HCT116 (cell line): ENCODE measurements at regions of chr5 and their contacts with region 1.

Region 1: DNA sequence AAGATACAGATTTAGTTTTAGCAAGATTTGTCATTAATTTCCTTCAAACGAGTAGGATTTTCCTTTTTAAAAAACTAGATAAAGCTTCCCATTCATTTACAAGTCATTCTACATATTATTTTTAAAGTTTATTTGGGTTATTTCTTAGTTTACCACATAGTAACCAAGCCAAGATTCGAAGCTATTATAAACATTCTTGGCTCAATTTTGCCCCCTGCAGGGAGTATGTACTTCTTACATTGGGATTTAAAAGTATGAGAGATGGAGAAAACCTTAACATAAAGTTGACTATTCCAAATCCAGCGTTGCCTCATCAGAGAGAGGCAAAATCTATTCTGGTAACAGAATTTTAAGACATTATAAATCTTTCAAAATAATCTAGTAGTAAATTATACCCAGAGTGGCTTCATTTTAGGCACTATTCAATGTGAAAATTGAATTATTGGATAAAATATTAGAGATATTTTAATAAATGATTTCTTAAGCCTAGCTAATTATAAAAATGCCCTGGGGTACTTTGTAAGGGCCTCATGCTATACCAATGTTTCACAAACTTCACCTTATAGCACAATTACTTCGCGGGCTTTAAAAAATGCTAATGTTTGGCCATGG is 39.1 kb downstream of the FBN2 start:
- DNase-seq: peak; percentile 40
- ATAC-seq: peak; percentile 70
- H3K4me3 ChIP-seq: no peak overlapping the region
- H3K27ac ChIP-seq: no peak overlapping the region
- H3K4me1 ChIP-seq: no peaks in the 10 kb centered on the region
- H3K27me3 ChIP-seq: no peaks in the 10 kb centered on the region
- CTCF ChIP-seq: peak; percentile 47 to 66 (median 65); a peak in 5 of 6 replicates
- POLR2A ChIP-seq: no peak
- RAD21 ChIP-seq: peak; percentile 81

Region 2: GRCh38 chr5:127564002-127564769 is 934.8 kb before region 1 on chr5:
- CTCF ChIA-PET with region 1: interaction called, 3 read pairs
- POLR2A ChIA-PET with region 1: no interaction called
- RAD21 ChIA-PET with region 1: no interaction called
- intact Hi-C with region 1: loop called (anchors 2 kb)
- DNase-seq: peak; percentile 48
- ATAC-seq: peak; percentile 90
- H3K4me3 ChIP-seq: no peak overlapping the region
- H3K27ac ChIP-seq: no peak overlapping the region
- H3K4me1 ChIP-seq: no peaks in the 10 kb centered on the region
- H3K27me3 ChIP-seq: no peaks in the 10 kb centered on the region
- CTCF ChIP-seq: peak; percentile 52 to 82 (median 69); a peak in 5 of 6 replicates
- POLR2A ChIP-seq: no peak
- RAD21 ChIP-seq: peak; percentile 81

Region 3: DNA sequence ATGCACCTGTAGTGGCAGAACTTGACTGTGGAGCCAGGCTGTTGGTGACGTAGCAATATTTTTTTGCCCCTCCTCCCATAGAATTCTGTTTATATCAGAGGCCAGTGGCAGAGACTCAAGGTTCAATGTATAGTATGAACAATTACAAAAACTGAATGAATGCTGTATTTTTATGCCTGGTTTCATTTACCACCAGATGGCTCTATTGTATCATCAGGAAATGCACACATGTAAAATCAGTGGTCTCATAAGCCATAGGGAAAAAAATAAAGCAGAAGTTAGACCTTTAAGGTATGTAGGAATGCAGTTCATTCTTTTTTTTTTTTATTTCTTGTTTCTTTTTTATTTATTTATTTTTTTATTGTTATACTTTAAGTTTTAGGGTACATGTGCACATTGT is 752.2 kb before region 1 on chr5:
- CTCF ChIA-PET with region 1: no interaction called
- POLR2A ChIA-PET with region 1: no interaction called
- RAD21 ChIA-PET with region 1: no interaction called
- intact Hi-C with region 1: loop called (anchors 10 kb)
- DNase-seq: peak; percentile 10
- ATAC-seq: peak; percentile 72
- H3K4me3 ChIP-seq: no peak overlapping the region
- H3K27ac ChIP-seq: no peak overlapping the region
- H3K4me1 ChIP-seq: no peaks in the 10 kb centered on the region
- H3K27me3 ChIP-seq: no peaks in the 10 kb centered on the region
- CTCF ChIP-seq: peak; percentile 27 to 49 (median 39); a peak in 4 of 6 replicates
- POLR2A ChIP-seq: no peak
- RAD21 ChIP-seq: peak; percentile 66

Region 4: DNA sequence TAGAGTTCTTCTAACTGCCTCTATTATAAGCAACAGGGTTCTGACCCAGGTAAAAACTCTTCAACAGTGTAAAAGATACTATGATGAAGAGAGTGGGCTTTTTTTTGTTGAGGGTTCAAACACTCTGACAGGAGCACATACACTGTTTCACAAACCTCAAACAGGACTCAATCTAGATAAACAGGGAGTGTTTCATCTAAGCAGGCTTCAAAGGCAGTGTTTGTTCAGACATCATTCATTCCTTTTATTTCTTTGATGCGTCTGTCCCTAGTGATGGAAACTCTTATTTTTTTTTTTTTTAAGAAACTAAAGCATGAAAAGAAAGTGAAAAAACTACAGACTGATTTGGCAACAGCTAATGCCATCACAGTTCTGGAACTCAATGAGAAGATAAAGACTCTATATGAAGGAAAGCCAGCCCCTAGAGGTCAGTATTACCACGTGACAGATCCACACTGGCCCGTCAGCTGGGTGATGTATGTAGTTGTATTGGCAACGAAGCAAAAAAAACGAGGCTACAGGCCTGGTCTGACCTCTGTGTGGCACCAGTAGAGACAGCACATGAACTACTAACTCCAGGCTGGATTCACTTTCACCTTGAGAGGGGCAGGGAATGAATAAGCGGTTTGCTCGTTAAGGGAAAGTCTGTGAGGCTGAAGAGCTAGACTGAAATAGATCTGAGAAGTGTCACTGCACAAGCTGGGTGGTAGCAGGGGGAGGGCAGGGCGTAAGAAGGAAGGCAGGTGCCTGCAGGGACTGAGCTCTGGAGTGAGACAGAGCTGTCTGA is 623.5 kb before region 1 on chr5:
- CTCF ChIA-PET with region 1: interaction called, 10 read pairs
- POLR2A ChIA-PET with region 1: no interaction called
- RAD21 ChIA-PET with region 1: no interaction called
- intact Hi-C with region 1: loop called (anchors 5 kb)
- DNase-seq: peak; percentile 65
- ATAC-seq: peak; percentile 84
- H3K4me3 ChIP-seq: no peak overlapping the region
- H3K27ac ChIP-seq: peak overlapping the region; percentile 0; the same call in 1 of the 2 replicates
- H3K4me1 ChIP-seq: peaks cover 14 to 26% of the 10 kb centered on the region in 2 experiments
- H3K27me3 ChIP-seq: no peaks in the 10 kb centered on the region
- CTCF ChIP-seq: peak; percentile 5 to 53 (median 52); a peak in 3 of 6 replicates
- POLR2A ChIP-seq: no peak
- RAD21 ChIP-seq: peak; percentile 84

Region 5: DNA sequence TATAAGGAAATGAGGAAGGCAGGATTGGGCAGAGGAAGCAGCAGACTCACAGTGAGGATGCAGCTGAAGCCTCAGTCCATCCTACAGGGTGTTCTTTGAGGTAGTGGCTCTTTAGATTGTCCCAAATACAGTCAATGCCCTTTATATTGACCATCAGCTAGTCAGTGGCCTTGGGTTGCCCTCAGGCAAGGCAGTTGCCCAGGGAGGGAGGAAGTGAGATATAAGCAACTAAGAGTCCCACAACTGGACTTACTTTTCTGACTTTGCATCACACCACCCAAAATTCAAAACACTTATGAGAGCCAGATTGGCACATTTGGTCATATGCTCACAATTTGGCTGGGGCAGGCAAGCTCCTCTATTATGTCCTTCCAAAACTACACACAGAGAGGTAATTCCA is 424.8 kb before region 1 on chr5:
- CTCF ChIA-PET with region 1: no interaction called
- POLR2A ChIA-PET with region 1: no interaction called
- RAD21 ChIA-PET with region 1: no interaction called
- intact Hi-C with region 1: no loop called
- DNase-seq: no peak
- ATAC-seq: no peak
- H3K4me3 ChIP-seq: no peak overlapping the region
- H3K27ac ChIP-seq: no peak overlapping the region
- H3K4me1 ChIP-seq: no peaks in the 10 kb centered on the region
- H3K27me3 ChIP-seq: no peaks in the 10 kb centered on the region
- CTCF ChIP-seq: no peak
- POLR2A ChIP-seq: no peak
- RAD21 ChIP-seq: no peak

Region 6: DNA sequence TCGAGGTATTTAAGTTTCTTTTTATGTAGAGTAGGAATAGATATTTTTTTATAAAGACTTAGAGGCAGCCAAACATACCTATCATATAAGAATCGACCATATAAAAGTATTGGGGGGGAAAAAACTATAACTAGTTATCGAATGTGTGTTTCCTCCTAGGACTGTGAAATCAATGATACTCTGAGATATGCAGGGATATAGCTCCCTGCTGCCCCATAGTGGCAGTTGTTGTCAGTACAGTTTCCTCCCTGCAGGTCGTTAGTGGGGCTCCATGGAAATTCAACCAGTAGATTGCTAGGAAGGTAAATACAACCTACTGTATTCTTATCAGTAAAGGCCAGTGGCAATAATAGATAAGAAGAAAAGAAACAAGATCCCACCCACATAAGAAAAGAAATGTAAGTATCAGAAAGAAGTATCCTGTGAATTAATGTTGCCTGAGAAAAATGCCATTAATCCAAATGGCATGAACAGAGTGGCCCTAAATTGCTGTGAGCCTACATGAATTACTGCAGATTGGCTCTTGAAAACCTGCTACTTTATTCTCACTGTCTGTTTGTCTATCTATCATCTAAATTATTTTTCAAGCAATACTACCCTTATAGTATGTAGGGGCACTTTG is 176.0 kb after region 1 on chr5:
- CTCF ChIA-PET with region 1: interaction called, 7 read pairs
- POLR2A ChIA-PET with region 1: no interaction called
- RAD21 ChIA-PET with region 1: no interaction called
- intact Hi-C with region 1: loop called (anchors 5 kb)
- DNase-seq: peak; percentile 50
- ATAC-seq: peak; percentile 97
- H3K4me3 ChIP-seq: no peak overlapping the region
- H3K27ac ChIP-seq: no peak overlapping the region
- H3K4me1 ChIP-seq: no peaks in the 10 kb centered on the region
- H3K27me3 ChIP-seq: no peaks in the 10 kb centered on the region
- CTCF ChIP-seq: peak; percentile 47 to 89 (median 84); a peak in 5 of 6 replicates
- POLR2A ChIP-seq: no peak
- RAD21 ChIP-seq: peak; percentile 67

Region 7: GRCh38 chr5:128844354-128844923 is 345.5 kb after region 1 on chr5:
- CTCF ChIA-PET with region 1: interaction called, 5 read pairs
- POLR2A ChIA-PET with region 1: no interaction called
- RAD21 ChIA-PET with region 1: interaction called in 1 of 2 experiments, 4 read pairs
- intact Hi-C with region 1: loop called (anchors 5 kb)
- DNase-seq: no peak
- ATAC-seq: no peak
- H3K4me3 ChIP-seq: no peak overlapping the region
- H3K27ac ChIP-seq: no peak overlapping the region
- H3K4me1 ChIP-seq: no peaks in the 10 kb centered on the region
- H3K27me3 ChIP-seq: no peaks in the 10 kb centered on the region
- CTCF ChIP-seq: peak in 2 of 3 experiments; percentile 35 to 46; a peak in 3 of 6 replicates
- POLR2A ChIP-seq: no peak
- RAD21 ChIP-seq: peak; percentile 68